Sigmoid colon (tissue), 7 donors: ENCODE measurements at regions of chr15 and their contacts with region 1.

Region 1: GRCh38 chr15:22980189-22981050 is at the start of gene CYFIP1:
- DNase-seq: peak; percentile 93
- H3K4me3 ChIP-seq: peak within 1 kb of the TSS; percentile 82 to 95 (median 90)
- H3K27ac ChIP-seq: peak within 1 kb of the TSS; percentile 81 to 87 (median 82)
- H3K4me1 ChIP-seq: peaks cover 0 to 21% (median 12%) of the 10 kb centered on the region in 4 donors
- H3K27me3 ChIP-seq: no peaks in the 10 kb centered on the region
- CTCF ChIP-seq: no peak
- EP300 ChIP-seq: no peak
- POLR2A ChIP-seq: peak; percentile 10 to 20
- total RNA-seq, gene CYFIP1: 69.8 to 99.6 (median 77.2) TPM

Region 2: GRCh38 chr15:22949074-22949547 is 31.3 kb before region 1 on chr15:
- intact Hi-C with region 1: loop called (anchors 2 kb)
- DNase-seq: peak; percentile 81
- H3K4me3 ChIP-seq: peak overlapping the region in 2 of 4 donors; percentile 5 to 20
- H3K27ac ChIP-seq: peak overlapping the region; percentile 35 to 77 (median 70)
- H3K4me1 ChIP-seq: peaks cover 0 to 78% (median 72%) of the 10 kb centered on the region in 4 donors
- H3K27me3 ChIP-seq: no peaks in the 10 kb centered on the region
- CTCF ChIP-seq: no peak
- EP300 ChIP-seq: no peak
- POLR2A ChIP-seq: no peak

Region 3: GRCh38 chr15:23514484-23514883 is 534.1 kb after region 1 on chr15:
- intact Hi-C with region 1: no loop called
- DNase-seq: no peak
- H3K4me3 ChIP-seq: no peak overlapping the region
- H3K27ac ChIP-seq: no peak overlapping the region
- H3K4me1 ChIP-seq: no peaks in the 10 kb centered on the region
- H3K27me3 ChIP-seq: no peaks in the 10 kb centered on the region
- CTCF ChIP-seq: no peak
- EP300 ChIP-seq: no peak
- POLR2A ChIP-seq: no peak